AG04449 (cell line): ENCODE measurements at regions of chr2 and their contacts with region 1.

Region 1: DNA sequence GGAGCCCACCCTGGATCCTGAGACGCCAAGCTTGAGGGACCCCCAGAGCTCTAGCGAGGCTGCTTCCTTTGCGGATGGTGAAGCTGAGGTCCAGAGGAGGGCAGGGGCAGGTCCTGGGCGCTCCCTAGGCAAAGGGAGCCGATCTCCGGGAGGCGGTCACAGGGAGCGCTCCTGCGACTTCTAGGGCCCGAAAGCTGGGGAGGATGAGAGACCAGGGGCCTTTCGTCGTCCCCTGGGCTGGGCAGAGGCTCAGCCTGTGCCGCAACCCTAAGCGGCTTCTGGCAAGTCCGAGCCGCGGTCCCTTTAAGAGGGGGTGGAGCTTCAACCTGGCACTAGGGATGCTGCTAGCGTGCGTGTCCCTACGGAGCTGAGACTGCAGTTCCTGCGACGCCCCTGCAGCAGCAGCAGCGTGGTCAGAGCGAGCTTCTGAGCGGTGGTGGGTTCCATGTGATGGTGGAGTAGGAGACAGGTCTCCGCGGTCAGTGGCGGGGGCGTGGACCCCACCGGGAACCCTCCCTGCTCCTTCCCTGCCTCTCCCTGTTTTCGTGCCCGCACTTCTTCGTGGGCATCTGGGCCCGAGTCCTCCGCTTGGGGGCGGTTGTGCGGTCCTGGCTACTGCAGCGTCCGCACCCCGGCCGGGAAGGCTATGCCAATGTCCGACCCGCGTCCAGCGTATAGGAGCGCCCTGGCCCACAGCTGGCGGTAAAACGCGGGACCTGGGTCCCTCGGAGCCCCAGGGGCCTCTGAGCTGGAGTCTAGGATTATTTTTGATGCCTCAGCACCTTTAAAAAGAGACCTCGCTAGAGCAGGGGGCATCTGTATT is 154.6 kb downstream of the CCDC74A start:
- DNase-seq: no peak
- H3K4me3 ChIP-seq: peak overlapping the region; percentile 80
- CTCF ChIP-seq: peak; percentile 57

Region 2: GRCh38 chr2:131801210-131801744 is 118.9 kb after region 1 on chr2:
- CTCF ChIA-PET with region 1: interaction called, 19 read pairs
- POLR2A ChIA-PET with region 1: no interaction called
- DNase-seq: no peak
- H3K4me3 ChIP-seq: no peak overlapping the region
- CTCF ChIP-seq: no peak